Activated CD4-positive, alpha-beta T cell treated with anti-CD3 and anti-CD28 coated beads for 36 hours (primary cell): ENCODE measurements at regions of chr5 and their contacts with region 1.

Region 1: DNA sequence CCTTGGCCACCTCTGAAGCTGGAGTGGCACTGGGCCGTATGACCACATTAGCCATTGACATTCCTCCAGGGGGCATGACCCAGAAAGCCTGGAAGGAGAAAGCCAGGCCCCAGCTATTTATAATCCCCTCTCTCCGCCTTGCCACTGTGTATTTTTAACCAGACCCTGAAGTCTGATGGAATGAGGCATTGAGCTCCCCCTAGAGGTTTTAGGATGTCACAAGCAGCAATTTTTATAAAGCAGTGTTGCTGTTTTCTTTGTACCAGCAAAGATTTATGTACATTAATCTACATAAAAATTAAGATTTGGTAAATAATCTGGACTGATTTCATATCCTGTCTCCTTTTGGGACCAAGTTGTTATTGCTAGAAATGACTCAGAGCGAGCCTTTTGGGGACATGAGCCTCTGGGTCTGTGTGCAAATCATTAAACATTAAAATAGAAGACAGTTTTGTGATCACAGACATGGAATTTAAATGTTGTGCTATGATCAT is 127.1 kb downstream of the TRIO start:
- DNase-seq: no peak
- ATAC-seq: no peak
- H3K4me3 Mint-ChIP-seq: no peak overlapping the region
- H3K27ac Mint-ChIP-seq: no peak overlapping the region
- H3K4me1 Mint-ChIP-seq: peaks cover 9% of the 10 kb centered on the region
- H3K27me3 Mint-ChIP-seq: peaks cover 9% of the 10 kb centered on the region

Region 2: GRCh38 chr5:13987843-13988464 is 282.3 kb before region 1 on chr5:
- CTCF ChIA-PET with region 1: interaction called, 8 read pairs
- POLR2A ChIA-PET with region 1: no interaction called
- intact Hi-C with region 1: loop called (anchors 1 kb)
- DNase-seq: peak; percentile 61
- ATAC-seq: no peak
- H3K4me3 Mint-ChIP-seq: no peak overlapping the region
- H3K27ac Mint-ChIP-seq: no peak overlapping the region
- H3K4me1 Mint-ChIP-seq: no peaks in the 10 kb centered on the region
- H3K27me3 Mint-ChIP-seq: peaks cover 4% of the 10 kb centered on the region

Region 3: DNA sequence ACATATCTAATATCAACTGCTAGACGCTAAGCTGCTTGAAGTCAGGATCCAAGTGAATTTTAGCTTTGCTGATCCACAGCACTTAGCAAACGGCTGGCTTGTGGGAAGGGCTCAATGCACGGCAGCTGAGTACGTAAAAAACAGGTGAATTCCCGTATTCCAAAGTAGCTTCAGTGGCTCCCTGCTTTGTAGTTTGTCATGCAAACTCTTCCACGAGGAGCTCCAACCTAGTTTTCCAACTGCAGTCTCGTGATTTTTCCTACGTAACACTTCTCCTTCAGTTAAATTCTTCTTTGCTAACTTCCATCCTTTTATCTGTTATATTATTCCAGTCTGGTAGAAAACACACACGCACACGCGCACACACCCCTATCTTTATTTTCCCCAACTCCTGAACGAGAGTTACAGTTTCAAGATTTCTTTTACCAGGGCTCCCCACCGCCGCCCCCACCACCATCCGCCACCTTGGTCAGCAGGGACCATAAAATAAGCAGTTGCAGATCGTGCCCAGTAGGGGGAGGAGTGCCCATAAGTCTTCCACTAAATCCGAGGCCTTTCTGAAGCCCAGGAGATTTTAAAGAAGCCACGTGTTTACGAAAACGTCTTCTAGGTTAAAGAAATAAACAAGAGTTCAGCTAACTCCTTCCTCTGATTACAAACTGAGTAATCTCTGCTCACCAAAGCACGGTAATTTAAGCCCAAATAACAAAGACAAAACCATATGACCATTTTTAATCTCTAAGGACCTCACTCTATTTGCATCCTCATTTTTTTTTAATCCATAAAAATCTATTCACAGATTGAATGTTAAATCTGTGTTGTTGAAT is 161.9 kb before region 1 on chr5:
- CTCF ChIA-PET with region 1: interaction called, 3 read pairs
- POLR2A ChIA-PET with region 1: no interaction called
- intact Hi-C with region 1: loop called (anchors 1 to 10 kb)
- DNase-seq: peak; percentile 57
- ATAC-seq: peak; percentile 47
- H3K4me3 Mint-ChIP-seq: no peak overlapping the region
- H3K27ac Mint-ChIP-seq: peak overlapping the region; percentile 38
- H3K4me1 Mint-ChIP-seq: peaks cover 15% of the 10 kb centered on the region
- H3K27me3 Mint-ChIP-seq: peaks cover 17% of the 10 kb centered on the region

Region 4: DNA sequence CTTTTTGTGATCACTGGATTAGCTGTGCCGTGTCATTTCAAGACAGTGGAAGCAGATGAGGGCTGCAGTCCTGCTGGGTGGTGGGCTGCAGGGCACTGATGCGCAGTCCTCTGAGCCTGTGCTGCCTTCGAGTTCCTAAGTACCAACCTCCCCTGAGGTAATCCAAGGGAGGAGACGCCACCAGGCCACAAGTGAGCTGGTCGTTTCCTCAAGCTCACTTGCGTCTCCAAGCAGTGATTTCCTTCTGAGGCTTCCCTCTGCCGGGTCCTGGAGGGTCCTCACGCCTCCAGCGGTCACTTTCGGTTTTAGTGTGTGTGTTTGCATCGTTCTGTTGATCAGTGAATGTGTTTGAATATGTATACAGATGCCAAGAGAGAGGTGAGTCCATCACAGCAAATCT is 11.4 kb before region 1 on chr5:
- CTCF ChIA-PET with region 1: interaction called, 14 read pairs
- POLR2A ChIA-PET with region 1: no interaction called
- intact Hi-C with region 1: no loop called
- DNase-seq: no peak
- ATAC-seq: no peak
- H3K4me3 Mint-ChIP-seq: no peak overlapping the region
- H3K27ac Mint-ChIP-seq: no peak overlapping the region
- H3K4me1 Mint-ChIP-seq: peaks cover 6% of the 10 kb centered on the region
- H3K27me3 Mint-ChIP-seq: peaks cover 3% of the 10 kb centered on the region

Region 5: GRCh38 chr5:14463629-14464028 is 193.4 kb after region 1 on chr5:
- CTCF ChIA-PET with region 1: no interaction called
- POLR2A ChIA-PET with region 1: no interaction called
- intact Hi-C with region 1: no loop called
- DNase-seq: no peak
- ATAC-seq: no peak
- H3K4me3 Mint-ChIP-seq: no peak overlapping the region
- H3K27ac Mint-ChIP-seq: no peak overlapping the region
- H3K4me1 Mint-ChIP-seq: no peaks in the 10 kb centered on the region
- H3K27me3 Mint-ChIP-seq: no peaks in the 10 kb centered on the region